ENCODE measurements at regions of chrX and their contacts with region 1.

Region 1: DNA sequence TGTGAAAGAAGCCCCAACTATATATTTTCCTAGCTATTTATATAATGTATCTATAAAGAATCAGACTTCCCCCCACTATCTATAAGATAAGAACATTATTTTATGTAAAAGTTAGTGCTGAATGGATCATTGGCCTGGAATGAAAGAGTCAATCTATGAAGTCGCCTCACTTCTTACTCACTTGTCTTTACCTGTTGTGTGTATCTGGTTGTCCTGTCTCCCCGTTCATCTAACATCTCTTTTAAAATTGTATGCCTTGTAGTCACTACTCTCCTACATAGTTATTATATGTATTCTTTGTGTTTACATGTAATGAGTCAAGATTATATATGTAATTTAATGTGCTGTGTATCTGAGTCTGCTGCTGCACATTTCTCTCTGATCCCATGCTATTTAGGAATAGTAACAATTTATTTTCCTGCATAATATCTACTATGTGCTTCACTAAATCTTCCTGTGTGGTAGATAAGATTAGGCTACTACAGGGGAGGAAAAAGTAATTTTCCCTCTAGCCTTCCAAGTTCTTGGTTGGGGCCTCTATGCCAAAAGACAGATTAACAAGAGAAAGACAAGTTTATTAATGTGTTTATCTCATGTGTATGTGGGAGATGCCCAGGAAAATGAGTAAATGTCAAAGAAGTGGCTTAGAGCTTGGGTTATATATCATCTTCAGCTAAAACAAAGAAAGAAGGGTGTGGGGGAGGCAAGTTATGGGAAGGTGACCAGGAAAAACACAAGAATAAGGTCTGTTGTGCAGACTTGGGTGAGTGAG is 77.6 kb upstream of the FRMPD4 start:
- DNase-seq: no peak
- H3K4me3 Mint-ChIP-seq: no peak overlapping the region
- H3K27ac Mint-ChIP-seq: no peak overlapping the region
- H3K4me1 Mint-ChIP-seq: no peaks in the 10 kb centered on the region
- H3K27me3 Mint-ChIP-seq: no peaks in the 10 kb centered on the region
- CTCF ChIP-seq: no peak

Region 2: GRCh38 chrX:11967986-11968859 is 92.5 kb before region 1 on chrX:
- CTCF ChIA-PET with region 1: no interaction called
- POLR2A ChIA-PET with region 1: no interaction called
- intact Hi-C with region 1: loop called (anchors 5 kb)
- DNase-seq: peak; percentile 24
- H3K4me3 Mint-ChIP-seq: no peak overlapping the region
- H3K27ac Mint-ChIP-seq: no peak overlapping the region
- H3K4me1 Mint-ChIP-seq: no peaks in the 10 kb centered on the region
- H3K27me3 Mint-ChIP-seq: no peaks in the 10 kb centered on the region
- CTCF ChIP-seq: no peak